AG04450 (cell line): ENCODE measurements at regions of chr16 and their contacts with region 1.

Region 1: DNA sequence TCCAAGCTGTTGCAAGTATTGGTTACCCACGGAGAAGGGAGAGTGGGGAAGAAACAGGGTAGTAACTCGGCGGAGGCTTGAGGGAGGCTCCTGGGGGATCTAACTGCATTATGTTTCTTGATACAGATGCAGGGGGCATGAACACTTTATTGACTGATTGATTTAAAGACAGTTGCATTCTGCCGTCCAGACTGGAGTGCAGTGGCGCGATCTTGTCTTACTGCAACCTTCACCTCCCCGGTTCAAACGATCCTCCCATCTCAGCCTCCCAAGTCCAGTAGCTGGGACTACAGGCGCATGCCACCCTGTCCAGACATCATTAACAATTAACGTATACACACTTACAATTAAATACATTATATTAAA is 15.1 kb upstream of the ERN2 start:
- DNase-seq: no peak
- H3K4me3 ChIP-seq: no peak overlapping the region
- H3K27ac ChIP-seq: no peak overlapping the region
- H3K27me3 ChIP-seq: no peaks in the 10 kb centered on the region
- CTCF ChIP-seq: no peak

Region 2: GRCh38 chr16:23670137-23670776 is 57.8 kb before region 1 on chr16:
- CTCF ChIA-PET with region 1: interaction called, 13 read pairs
- POLR2A ChIA-PET with region 1: no interaction called
- DNase-seq: peak; percentile 76
- H3K4me3 ChIP-seq: no peak overlapping the region
- H3K27ac ChIP-seq: peak overlapping the region; percentile 87
- H3K27me3 ChIP-seq: no peaks in the 10 kb centered on the region
- CTCF ChIP-seq: no peak

Region 3: DNA sequence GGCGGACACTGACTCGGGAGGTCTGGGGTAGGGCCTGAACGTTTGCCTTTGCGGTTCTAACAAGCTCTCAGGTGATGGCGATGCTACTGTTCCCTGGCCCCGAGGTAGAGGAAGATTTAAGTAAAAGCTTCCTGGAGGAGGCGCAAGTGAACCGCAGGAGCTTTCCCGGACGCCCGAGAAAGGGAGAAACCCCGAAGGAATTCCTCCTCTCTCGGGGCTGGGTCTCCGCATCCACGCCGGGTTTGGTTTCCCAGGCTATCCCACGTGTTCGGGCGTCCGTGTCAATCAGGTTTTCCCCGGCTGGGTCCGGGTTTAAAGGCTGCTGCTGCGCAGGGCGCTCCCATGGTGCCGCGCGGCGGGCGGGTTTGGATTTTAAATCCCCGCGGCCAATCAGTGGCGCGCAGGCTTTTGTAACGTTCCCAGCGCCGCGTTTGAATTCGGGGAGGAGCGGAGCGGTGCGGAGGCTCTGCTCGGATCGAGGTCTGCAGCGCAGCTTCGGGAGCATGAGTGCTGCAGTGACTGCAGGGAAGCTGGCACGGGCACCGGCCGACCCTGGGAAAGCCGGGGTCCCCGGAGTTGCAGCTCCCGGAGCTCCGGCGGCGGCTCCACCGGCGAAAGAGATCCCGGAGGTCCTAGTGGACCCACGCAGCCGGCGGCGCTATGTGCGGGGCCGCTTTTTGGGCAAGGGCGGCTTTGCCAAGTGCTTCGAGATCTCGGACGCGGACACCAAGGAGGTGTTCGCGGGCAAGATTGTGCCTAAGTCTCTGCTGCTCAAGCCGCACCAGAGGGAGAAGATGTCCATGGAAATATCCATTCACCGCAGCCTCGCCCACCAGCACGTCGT is 49.4 kb before region 1 on chr16 and contains the start of gene PLK1:
- CTCF ChIA-PET with region 1: interaction called, 15 read pairs
- POLR2A ChIA-PET with region 1: interaction called, 3 read pairs
- DNase-seq: peak; percentile 45
- H3K4me3 ChIP-seq: peak within 1 kb of the TSS; percentile 67
- H3K27ac ChIP-seq: peak within 1 kb of the TSS; percentile 31
- H3K27me3 ChIP-seq: no peaks in the 10 kb centered on the region
- CTCF ChIP-seq: peak; percentile 51
- polyA plus RNA-seq, gene PLK1: 10.7 and 11.6 TPM in 2 replicates